Ascending aorta (tissue), 2 donors: ENCODE measurements at regions of chr19 and their contacts with region 1.

Region 1: GRCh38 chr19:48170038-48170812 is at the starts of genes LIG1 and ZSWIM9:
- DNase-seq: peak; percentile 65 to 93
- H3K4me3 ChIP-seq: peak within 1 kb of the TSS; percentile 65 to 85
- H3K27ac ChIP-seq: peak within 1 kb of the TSS; percentile 82 to 88
- H3K4me1 ChIP-seq: peaks cover 3 to 7% of the 10 kb centered on the region in 2 donors
- H3K27me3 ChIP-seq: no peaks in the 10 kb centered on the region
- CTCF ChIP-seq: peak in 1 of 3 experiments; percentile 14
- total RNA-seq, gene LIG1: 0.64 TPM
- total RNA-seq, gene ZSWIM9: 16.0 TPM

Region 2: DNA sequence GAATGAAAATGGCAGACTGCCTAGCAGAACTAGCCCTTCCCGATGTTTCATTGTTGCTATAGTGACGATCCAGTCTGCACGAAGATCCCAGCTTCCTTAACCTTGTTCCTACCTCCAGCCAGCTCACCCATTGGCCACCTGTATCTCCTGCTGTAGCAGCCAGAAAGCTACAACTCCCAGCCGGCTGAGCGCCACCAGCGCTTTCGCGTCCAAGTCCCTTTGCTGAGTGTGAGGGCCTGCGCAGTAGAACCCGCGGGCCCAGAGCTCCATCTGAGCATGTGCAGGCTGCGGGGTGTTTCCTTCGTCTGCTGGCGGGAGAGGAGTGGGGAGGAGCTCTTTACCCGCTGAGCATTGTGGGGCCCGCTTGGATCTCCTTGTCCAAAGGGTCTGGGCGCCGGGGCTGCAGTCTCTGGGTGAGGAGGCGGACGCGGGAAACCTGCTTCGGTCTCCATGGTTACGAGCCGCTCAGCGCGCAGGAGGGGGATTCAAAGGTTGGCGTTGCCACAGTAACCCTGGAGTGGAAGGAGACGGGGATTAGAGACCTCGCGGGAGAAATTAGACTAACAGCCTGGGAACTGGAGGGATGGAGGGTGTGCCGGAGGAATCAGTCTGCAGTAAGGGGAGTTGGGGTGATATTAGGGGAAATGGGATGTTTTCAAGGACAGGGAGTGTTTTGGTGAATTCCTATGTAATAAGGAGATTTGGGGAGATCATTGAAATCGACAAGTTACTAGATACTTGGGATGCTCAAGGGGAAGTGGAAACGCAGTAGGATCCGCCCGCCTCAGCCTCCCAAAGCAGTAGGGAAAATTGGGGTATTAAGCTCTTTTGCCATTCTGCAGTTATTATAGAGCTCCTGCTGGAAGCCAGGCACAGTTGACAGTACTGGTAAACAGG is 33.8 kb after region 1 on chr19:
- intact Hi-C with region 1: loop called (anchors 2 kb)
- DNase-seq: peak; percentile 68 to 96
- H3K4me3 ChIP-seq: peak overlapping the region; percentile 50 to 88
- H3K27ac ChIP-seq: peak overlapping the region; percentile 43 to 53
- H3K4me1 ChIP-seq: peaks cover 0 to 5% of the 10 kb centered on the region in 2 donors
- H3K27me3 ChIP-seq: no peaks in the 10 kb centered on the region
- CTCF ChIP-seq: no peak